Mammary epithelial cell (primary cell): ENCODE measurements at regions of chr19 and their contacts with region 1.

Region 1: DNA sequence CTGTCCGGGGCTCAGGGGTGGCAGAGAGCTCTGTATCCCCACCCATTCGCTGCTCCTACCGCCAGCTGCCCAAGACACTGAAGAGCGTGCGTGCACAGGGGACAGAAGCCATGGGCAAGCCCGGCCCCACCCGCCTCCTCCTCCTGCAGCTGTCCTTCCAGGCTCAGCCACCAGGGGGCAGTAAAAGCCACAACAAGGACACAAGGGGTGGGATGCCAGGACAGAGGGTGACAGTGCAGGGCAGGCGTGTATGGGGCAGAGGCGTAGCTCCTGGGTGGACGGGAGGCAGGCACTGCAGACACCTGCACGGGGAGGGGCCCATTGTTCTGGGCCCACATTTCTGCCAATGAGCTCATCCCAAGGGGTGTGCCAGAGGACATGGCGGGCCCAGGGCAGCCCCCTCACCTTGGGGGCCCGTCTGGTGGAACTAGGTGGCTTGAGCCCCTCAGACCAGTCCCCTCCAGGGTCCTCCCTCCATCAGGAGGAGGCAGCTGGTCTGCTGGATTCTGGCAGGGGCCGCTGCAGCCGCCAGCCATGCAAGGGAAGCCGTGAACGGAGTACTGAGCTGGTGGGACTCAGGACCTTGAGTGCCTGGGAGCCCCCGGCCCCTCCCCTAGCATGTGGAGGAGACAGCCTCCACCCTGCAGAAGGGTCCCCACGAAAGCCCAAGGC is 61.1 kb downstream of the MLLT1 start:
- DNase-seq: peak; percentile 58
- H3K4me3 ChIP-seq: no peak overlapping the region
- H3K27ac ChIP-seq: no peak overlapping the region
- H3K4me1 ChIP-seq: peaks cover 21% of the 10 kb centered on the region
- H3K27me3 ChIP-seq: no peaks in the 10 kb centered on the region
- CTCF ChIP-seq: peak; percentile 92 to 96

Region 2: GRCh38 chr19:6048808-6049405 is 169.7 kb before region 1 on chr19:
- CTCF ChIA-PET with region 1: no interaction called
- dilution Hi-C with region 1: no loop called
- in situ Hi-C with region 1: no loop called
- intact Hi-C with region 1: loop called (anchors 5 kb)
- DNase-seq: peak; percentile 65
- H3K4me3 ChIP-seq: no peak overlapping the region
- H3K27ac ChIP-seq: no peak overlapping the region
- H3K4me1 ChIP-seq: no peaks in the 10 kb centered on the region
- H3K27me3 ChIP-seq: no peaks in the 10 kb centered on the region
- CTCF ChIP-seq: peak; percentile 87 to 91

Region 3: DNA sequence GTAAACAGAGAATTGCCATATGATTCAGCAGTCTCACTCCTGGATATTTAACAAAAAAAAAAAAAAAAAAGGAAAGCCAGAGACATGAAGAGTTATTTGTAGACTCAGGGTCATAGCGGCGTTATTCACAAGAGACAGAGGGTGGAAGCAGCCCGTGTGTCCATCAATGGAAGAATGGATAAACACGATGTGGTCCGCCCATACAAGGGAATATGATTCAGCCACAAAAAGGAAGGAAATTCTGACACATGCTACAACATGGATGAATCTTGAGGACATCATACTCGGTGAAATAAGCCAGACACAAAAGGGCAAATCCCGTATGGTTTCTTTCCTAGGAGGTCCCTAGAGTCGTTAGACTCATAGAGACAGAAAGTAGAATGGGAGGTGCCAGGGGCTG is 68.3 kb before region 1 on chr19:
- CTCF ChIA-PET with region 1: no interaction called
- dilution Hi-C with region 1: no loop called
- in situ Hi-C with region 1: no loop called
- intact Hi-C with region 1: no loop called
- DNase-seq: no peak
- H3K4me3 ChIP-seq: no peak overlapping the region
- H3K27ac ChIP-seq: no peak overlapping the region
- H3K4me1 ChIP-seq: no peaks in the 10 kb centered on the region
- H3K27me3 ChIP-seq: no peaks in the 10 kb centered on the region
- CTCF ChIP-seq: no peak

Region 4: DNA sequence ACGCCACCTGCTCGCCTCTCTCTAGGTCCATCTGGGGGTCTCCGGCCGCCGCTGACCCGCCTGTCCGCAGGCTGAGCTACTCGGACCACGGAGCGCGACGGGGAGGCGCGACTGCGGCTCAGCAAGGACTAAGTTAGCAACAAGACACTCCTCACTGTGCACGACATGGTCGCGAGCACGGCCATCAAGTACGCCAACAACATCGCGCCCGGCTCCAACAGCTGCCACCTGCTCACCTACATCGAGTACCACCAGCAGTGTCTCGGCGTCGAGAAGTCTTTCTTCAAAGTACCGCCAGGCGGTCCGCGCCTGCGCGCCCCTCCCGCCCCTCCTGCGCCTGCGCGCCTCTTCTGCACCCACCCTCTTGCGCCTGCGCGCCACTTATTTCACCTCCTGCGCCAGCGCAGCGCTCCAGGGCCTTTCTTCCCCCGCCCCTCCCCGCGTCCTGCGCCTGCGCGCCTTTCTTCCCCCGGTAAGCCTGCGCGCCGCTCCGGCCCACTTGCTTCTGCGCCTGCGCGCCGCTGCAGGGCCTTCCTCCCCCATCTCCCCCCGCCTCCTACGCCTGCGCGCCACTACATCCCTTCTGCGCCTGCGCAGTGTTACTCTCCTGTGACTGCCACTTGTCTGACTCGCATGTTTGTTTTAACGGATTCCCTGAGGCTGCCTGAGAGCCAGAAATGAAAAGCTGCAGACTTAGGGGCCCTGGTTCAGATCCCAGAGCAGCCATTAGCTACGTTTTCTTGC is 19.2 kb before region 1 on chr19:
- CTCF ChIA-PET with region 1: no interaction called
- dilution Hi-C with region 1: no loop called
- in situ Hi-C with region 1: no loop called
- intact Hi-C with region 1: no loop called
- DNase-seq: peak; percentile 98
- H3K4me3 ChIP-seq: peak overlapping the region; percentile 79 to 100 (median 95)
- H3K27ac ChIP-seq: peak overlapping the region; percentile 2
- H3K4me1 ChIP-seq: peaks cover 5% of the 10 kb centered on the region
- H3K27me3 ChIP-seq: no peaks in the 10 kb centered on the region
- CTCF ChIP-seq: peak; percentile 16 to 36

Region 5: GRCh38 chr19:6279931-6280591 is 61.4 kb after region 1 on chr19 and contains the start of gene MLLT1:
- CTCF ChIA-PET with region 1: no interaction called
- dilution Hi-C with region 1: loop called (anchors 10 kb)
- in situ Hi-C with region 1: no loop called
- intact Hi-C with region 1: loop called (anchors 5 kb)
- DNase-seq: peak; percentile 97
- H3K4me3 ChIP-seq: peak within 1 kb of the TSS; percentile 81 to 90 (median 85)
- H3K27ac ChIP-seq: peak within 1 kb of the TSS; percentile 66
- H3K4me1 ChIP-seq: peaks cover 5% of the 10 kb centered on the region
- H3K27me3 ChIP-seq: no peaks in the 10 kb centered on the region
- CTCF ChIP-seq: peak; percentile 29 to 56
- total RNA-seq, gene MLLT1: 5.8 to 45.4 TPM

Region 6: GRCh38 chr19:6412447-6413091 is 193.9 kb after region 1 on chr19:
- CTCF ChIA-PET with region 1: no interaction called
- dilution Hi-C with region 1: loop called (anchors 10 kb)
- in situ Hi-C with region 1: no loop called
- intact Hi-C with region 1: no loop called
- DNase-seq: no peak
- H3K4me3 ChIP-seq: no peak overlapping the region
- H3K27ac ChIP-seq: no peak overlapping the region
- H3K4me1 ChIP-seq: no peaks in the 10 kb centered on the region
- H3K27me3 ChIP-seq: no peaks in the 10 kb centered on the region
- CTCF ChIP-seq: peak; percentile 60 to 63